T-cell (primary cell): ENCODE measurements at regions of chr9 and their contacts with region 1.

Region 1: GRCh38 chr9:6852243-6852963 is 94.6 kb downstream of the KDM4C start:
- DNase-seq: no peak
- ATAC-seq: no peak
- H3K4me3 ChIP-seq: no peak overlapping the region
- H3K4me3 Mint-ChIP-seq: no peak overlapping the region
- H3K27ac ChIP-seq: no peak overlapping the region
- H3K27ac Mint-ChIP-seq: no peak overlapping the region
- H3K4me1 ChIP-seq: no peaks in the 10 kb centered on the region
- H3K4me1 Mint-ChIP-seq: peaks cover 4 to 10% (median 6%) of the 10 kb centered on the region in 3 donors
- H3K27me3 ChIP-seq: no peaks in the 10 kb centered on the region
- H3K27me3 Mint-ChIP-seq: no peaks in the 10 kb centered on the region

Region 2: GRCh38 chr9:6739218-6739617 is 113.2 kb before region 1 on chr9:
- CTCF ChIA-PET with region 1: interaction called in 1 of 2 experiments, 5 read pairs
- POLR2A ChIA-PET with region 1: interaction called in 1 of 2 experiments, 10 read pairs
- DNase-seq: no peak
- ATAC-seq: no peak
- H3K4me3 ChIP-seq: no peak overlapping the region
- H3K4me3 Mint-ChIP-seq: no peak overlapping the region
- H3K27ac ChIP-seq: no peak overlapping the region
- H3K27ac Mint-ChIP-seq: no peak overlapping the region
- H3K4me1 ChIP-seq: no peaks in the 10 kb centered on the region
- H3K4me1 Mint-ChIP-seq: no peaks in the 10 kb centered on the region
- H3K27me3 ChIP-seq: no peaks in the 10 kb centered on the region
- H3K27me3 Mint-ChIP-seq: no peaks in the 10 kb centered on the region

Region 3: DNA sequence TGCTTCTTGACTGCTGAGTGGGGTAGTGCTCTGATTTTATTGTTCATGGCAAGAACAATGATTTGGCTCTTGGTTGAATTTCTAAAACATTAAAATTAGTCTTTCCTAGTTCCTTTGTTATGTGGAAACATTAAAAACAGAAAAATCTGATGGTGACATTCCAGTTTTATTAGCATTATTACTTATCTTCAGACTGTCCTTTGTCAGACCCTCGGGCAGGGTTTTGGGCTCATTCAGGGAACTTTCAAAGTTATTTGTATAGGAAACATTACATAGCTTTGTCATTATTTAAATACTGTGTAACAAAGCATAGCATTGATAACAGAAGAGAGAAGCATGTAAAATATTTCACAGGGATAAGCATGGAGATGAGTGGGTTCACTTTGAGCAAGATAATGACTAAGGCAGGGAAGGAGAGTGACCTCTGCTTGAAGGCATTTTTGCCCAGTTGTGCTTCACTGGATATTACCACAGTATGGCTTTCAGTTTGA is 25.3 kb after region 1 on chr9:
- CTCF ChIA-PET with region 1: interaction called in 1 of 2 experiments, 20 read pairs
- POLR2A ChIA-PET with region 1: no interaction called
- DNase-seq: no peak
- ATAC-seq: no peak
- H3K4me3 ChIP-seq: no peak overlapping the region
- H3K4me3 Mint-ChIP-seq: no peak overlapping the region
- H3K27ac ChIP-seq: no peak overlapping the region
- H3K27ac Mint-ChIP-seq: no peak overlapping the region
- H3K4me1 ChIP-seq: peaks cover 0 to 4% of the 10 kb centered on the region in 2 experiments
- H3K4me1 Mint-ChIP-seq: peaks cover 55 to 61% (median 58%) of the 10 kb centered on the region in 3 donors
- H3K27me3 ChIP-seq: no peaks in the 10 kb centered on the region
- H3K27me3 Mint-ChIP-seq: no peaks in the 10 kb centered on the region

Region 4: GRCh38 chr9:6931913-6932312 is 79.5 kb after region 1 on chr9:
- CTCF ChIA-PET with region 1: no interaction called
- POLR2A ChIA-PET with region 1: no interaction called
- DNase-seq: no peak
- ATAC-seq: peak in 1 of 4 experiments; percentile 47
- H3K4me3 ChIP-seq: no peak overlapping the region
- H3K4me3 Mint-ChIP-seq: no peak overlapping the region
- H3K27ac ChIP-seq: no peak overlapping the region
- H3K27ac Mint-ChIP-seq: no peak overlapping the region
- H3K4me1 ChIP-seq: no peaks in the 10 kb centered on the region
- H3K4me1 Mint-ChIP-seq: peaks cover 29 to 37% (median 34%) of the 10 kb centered on the region in 3 donors
- H3K27me3 ChIP-seq: no peaks in the 10 kb centered on the region
- H3K27me3 Mint-ChIP-seq: no peaks in the 10 kb centered on the region

Region 5: GRCh38 chr9:7387840-7388239 is 535.4 kb after region 1 on chr9:
- CTCF ChIA-PET with region 1: no interaction called
- POLR2A ChIA-PET with region 1: no interaction called
- DNase-seq: no peak
- ATAC-seq: no peak
- H3K4me3 ChIP-seq: no peak overlapping the region
- H3K4me3 Mint-ChIP-seq: no peak overlapping the region
- H3K27ac ChIP-seq: no peak overlapping the region
- H3K27ac Mint-ChIP-seq: no peak overlapping the region
- H3K4me1 ChIP-seq: no peaks in the 10 kb centered on the region
- H3K4me1 Mint-ChIP-seq: no peaks in the 10 kb centered on the region
- H3K27me3 ChIP-seq: no peaks in the 10 kb centered on the region
- H3K27me3 Mint-ChIP-seq: peaks cover 3 to 4% of the 10 kb centered on the region in 2 donors

Region 6: DNA sequence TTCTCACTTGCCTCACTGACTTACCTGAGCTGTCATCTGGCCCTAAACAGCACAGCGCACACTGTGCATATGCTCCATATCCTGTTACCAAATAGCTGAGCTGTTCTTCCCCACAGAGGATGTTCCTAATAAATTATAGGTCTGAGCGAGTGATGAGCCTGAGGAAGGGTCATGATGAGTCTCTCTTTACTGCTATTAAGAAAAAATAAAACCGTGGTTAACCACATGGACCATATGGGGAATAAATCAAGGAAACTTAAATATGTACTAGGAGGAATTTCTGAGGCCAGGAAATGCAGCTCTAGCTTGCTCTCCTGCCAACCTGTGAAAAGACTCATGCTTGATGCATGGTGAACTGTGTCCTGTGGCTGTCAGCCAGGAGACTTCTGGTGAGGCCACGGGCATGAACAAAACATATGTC is 1372.0 kb after region 1 on chr9:
- CTCF ChIA-PET with region 1: no interaction called
- POLR2A ChIA-PET with region 1: no interaction called
- DNase-seq: no peak
- ATAC-seq: no peak
- H3K4me3 ChIP-seq: no peak overlapping the region
- H3K4me3 Mint-ChIP-seq: no peak overlapping the region
- H3K27ac ChIP-seq: no peak overlapping the region
- H3K27ac Mint-ChIP-seq: no peak overlapping the region
- H3K4me1 ChIP-seq: no peaks in the 10 kb centered on the region
- H3K4me1 Mint-ChIP-seq: no peaks in the 10 kb centered on the region
- H3K27me3 ChIP-seq: no peaks in the 10 kb centered on the region
- H3K27me3 Mint-ChIP-seq: no peaks in the 10 kb centered on the region